Ascending aorta (tissue), 2 donors: ENCODE measurements at regions of chr19 and their contacts with region 1.

Region 1: DNA sequence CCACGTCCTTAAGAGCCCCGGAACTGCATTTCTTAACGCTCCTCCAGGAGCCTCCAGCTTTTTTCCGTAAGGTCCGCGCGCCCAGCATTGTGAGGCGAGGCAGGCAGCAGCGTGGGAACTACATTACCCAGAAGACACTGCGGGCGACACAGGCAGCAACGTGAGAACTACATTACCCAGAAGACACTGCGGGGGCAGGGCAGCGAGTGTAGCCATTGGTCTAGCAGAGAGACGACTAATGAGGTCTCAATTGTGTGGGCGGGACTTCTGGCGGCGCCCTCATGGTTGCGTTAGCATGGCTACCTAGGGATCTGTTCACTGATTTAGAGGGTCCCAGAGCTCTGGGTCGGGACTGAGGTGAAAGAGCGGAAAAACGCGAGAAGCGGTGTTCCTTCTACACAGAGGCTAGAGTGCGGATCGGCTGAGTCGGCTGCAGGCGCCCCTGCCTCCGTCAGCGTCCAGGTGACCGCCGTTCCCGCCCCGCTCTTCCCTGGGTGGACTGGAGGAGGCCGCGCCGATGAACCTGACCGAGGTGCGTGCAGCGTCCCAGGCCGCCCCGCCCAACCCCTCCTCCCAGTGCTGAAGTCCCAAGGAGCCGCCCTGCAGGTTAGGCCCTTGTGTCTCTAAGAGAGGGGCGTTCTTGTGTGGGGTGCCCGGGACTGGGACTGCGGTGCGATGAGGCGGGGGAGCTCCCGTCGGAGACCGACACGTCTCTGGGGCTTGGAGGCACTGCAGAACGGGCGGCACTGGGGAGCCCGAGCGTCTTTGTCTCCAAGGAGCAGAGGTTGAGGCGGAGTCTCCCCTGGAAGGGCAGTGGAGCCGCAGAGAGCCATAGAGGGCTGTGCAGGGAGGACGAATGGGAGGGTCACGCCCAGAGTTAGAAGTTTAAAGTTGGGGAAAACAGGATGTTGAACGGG is at the start of gene ZNF749:
- DNase-seq: peak; percentile 98 to 99
- H3K4me3 ChIP-seq: peak within 1 kb of the TSS; percentile 84 to 85
- H3K27ac ChIP-seq: no peak within 1 kb of the TSS
- H3K4me1 ChIP-seq: peaks cover 5 to 9% of the 10 kb centered on the region in 2 donors
- H3K27me3 ChIP-seq: no peaks in the 10 kb centered on the region
- CTCF ChIP-seq: no peak
- total RNA-seq, gene ZNF749: 2.7 TPM

Region 2: GRCh38 chr19:57240311-57241090 is 194.8 kb before region 1 on chr19 and contains the start of gene ZNF805:
- intact Hi-C with region 1: loop called (anchors 2 kb)
- DNase-seq: peak; percentile 80 to 97
- H3K4me3 ChIP-seq: peak within 1 kb of the TSS; percentile 84 to 91
- H3K27ac ChIP-seq: peak within 1 kb of the TSS; percentile 87 to 97
- H3K4me1 ChIP-seq: peaks cover 0 to 8% of the 10 kb centered on the region in 2 donors
- H3K27me3 ChIP-seq: no peaks in the 10 kb centered on the region
- CTCF ChIP-seq: peak in 1 of 3 experiments; percentile 13
- total RNA-seq, gene ZNF805: 22.8 TPM

Region 3: DNA sequence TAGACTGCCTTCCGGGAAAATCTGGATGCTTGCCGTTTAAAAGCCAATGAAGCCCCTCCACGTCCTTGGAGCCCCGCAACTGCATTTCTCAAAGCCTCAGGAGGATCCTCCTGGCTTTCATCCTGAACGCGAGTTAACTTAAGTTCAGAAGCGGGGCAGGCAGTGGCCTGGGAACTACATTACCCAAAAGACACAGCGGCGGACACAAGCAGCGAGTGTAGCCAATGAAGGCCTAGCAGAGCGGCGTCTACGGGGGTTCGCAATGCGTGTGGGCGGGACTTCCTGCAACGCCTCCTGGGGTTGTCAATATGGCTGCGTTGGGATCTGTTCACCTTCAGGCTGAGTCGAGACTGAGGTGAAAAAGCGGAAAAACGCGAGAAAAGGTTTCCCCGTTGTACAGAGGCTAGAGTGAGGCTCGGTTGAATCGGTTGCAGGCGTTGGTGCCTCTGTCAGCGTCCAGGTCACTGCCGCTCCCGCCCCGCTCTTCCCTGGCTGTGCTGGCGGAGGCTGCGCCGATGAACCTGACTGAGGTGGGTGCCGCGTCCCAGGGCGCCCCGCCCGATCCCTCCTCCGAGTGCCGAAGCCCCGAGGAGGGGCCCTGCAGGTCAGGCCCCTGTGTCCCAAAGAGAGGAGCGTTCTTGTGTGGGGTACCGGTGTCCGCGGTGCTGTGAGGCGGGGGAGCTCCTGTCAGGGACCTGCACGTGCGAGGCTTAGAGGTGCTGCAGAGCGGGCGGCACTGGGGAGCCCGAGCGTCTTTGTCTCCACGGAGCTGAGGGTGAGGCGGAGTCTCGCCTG is 24.2 kb before region 1 on chr19 and contains the start of gene ZNF17:
- intact Hi-C with region 1: loop called (anchors 1 kb)
- DNase-seq: peak; percentile 80 to 96
- H3K4me3 ChIP-seq: peak within 1 kb of the TSS; percentile 65 to 87
- H3K27ac ChIP-seq: peak within 1 kb of the TSS; percentile 63 to 71
- H3K4me1 ChIP-seq: no peaks in the 10 kb centered on the region
- H3K27me3 ChIP-seq: no peaks in the 10 kb centered on the region
- CTCF ChIP-seq: no peak
- total RNA-seq, gene ZNF17: 1.5 TPM